Right ventricle myocardium inferior (tissue), 1 donor: ENCODE measurements at regions of chr9 and their contacts with region 1.

Region 1: GRCh38 chr9:127116957-127117356 is 5.5 kb downstream of the ANGPTL2 start:
- DNase-seq: no peak
- ATAC-seq: no peak

Region 2: GRCh38 chr9:126985870-126986498 is 131.0 kb before region 1 on chr9:
- intact Hi-C with region 1: loop called (anchors 5 kb)
- DNase-seq: peak; percentile 83
- ATAC-seq: peak; percentile 57